CD8-positive, alpha-beta T cell (primary cell): ENCODE measurements at regions of chr14 and their contacts with region 1.

Region 1: GRCh38 chr14:99271951-99272631 is at the start of gene BCL11B:
- DNase-seq: peak in 8 of 9 experiments; percentile 74 to 93 (median 89)
- ATAC-seq: peak; percentile 73
- H3K4me3 ChIP-seq: peak within 1 kb of the TSS; percentile 81 to 88
- H3K4me3 Mint-ChIP-seq: peak within 1 kb of the TSS; percentile 99
- H3K27ac ChIP-seq: peak within 1 kb of the TSS; percentile 68 to 97
- H3K27ac Mint-ChIP-seq: peak within 1 kb of the TSS; percentile 98
- H3K4me1 ChIP-seq: peaks cover 17% of the 10 kb centered on the region
- H3K4me1 Mint-ChIP-seq: peaks cover 34% of the 10 kb centered on the region
- H3K27me3 ChIP-seq: no peaks in the 10 kb centered on the region
- H3K27me3 Mint-ChIP-seq: no peaks in the 10 kb centered on the region
- CTCF ChIP-seq: peak; percentile 61
- total RNA-seq, gene BCL11B: 273 to 284 TPM

Region 2: GRCh38 chr14:97602438-97603117 is 1669.5 kb before region 1 on chr14:
- CTCF ChIA-PET with region 1: no interaction called
- POLR2A ChIA-PET with region 1: interaction called, 3 read pairs
- intact Hi-C with region 1: loop called (anchors 2 to 5 kb)
- DNase-seq: peak; percentile 61 to 91 (median 80)
- ATAC-seq: peak; percentile 90
- H3K4me3 ChIP-seq: peak overlapping the region; percentile 19 to 21
- H3K4me3 Mint-ChIP-seq: no peak overlapping the region
- H3K27ac ChIP-seq: peak overlapping the region; percentile 66 to 84
- H3K27ac Mint-ChIP-seq: no peak overlapping the region
- H3K4me1 ChIP-seq: peaks cover 45% of the 10 kb centered on the region
- H3K4me1 Mint-ChIP-seq: peaks cover 38% of the 10 kb centered on the region
- H3K27me3 ChIP-seq: no peaks in the 10 kb centered on the region
- H3K27me3 Mint-ChIP-seq: no peaks in the 10 kb centered on the region
- CTCF ChIP-seq: no peak

Region 3: GRCh38 chr14:97724265-97724731 is 1547.8 kb before region 1 on chr14:
- CTCF ChIA-PET with region 1: no interaction called
- POLR2A ChIA-PET with region 1: no interaction called
- intact Hi-C with region 1: loop called in 1 of 2 experiments (anchors 5 kb)
- DNase-seq: peak in 7 of 9 experiments; percentile 37 to 79 (median 52)
- ATAC-seq: peak; percentile 76
- H3K4me3 ChIP-seq: peak overlapping the region; percentile 16 to 41
- H3K4me3 Mint-ChIP-seq: peak overlapping the region; percentile 83
- H3K27ac ChIP-seq: peak overlapping the region; percentile 60 to 72
- H3K27ac Mint-ChIP-seq: peak overlapping the region; percentile 98
- H3K4me1 ChIP-seq: peaks cover 65% of the 10 kb centered on the region
- H3K4me1 Mint-ChIP-seq: peaks cover 78% of the 10 kb centered on the region
- H3K27me3 ChIP-seq: no peaks in the 10 kb centered on the region
- H3K27me3 Mint-ChIP-seq: no peaks in the 10 kb centered on the region
- CTCF ChIP-seq: no peak

Region 4: GRCh38 chr14:98138666-98139065 is 1133.4 kb before region 1 on chr14:
- CTCF ChIA-PET with region 1: interaction called, 85 read pairs
- POLR2A ChIA-PET with region 1: interaction called, 29 read pairs
- intact Hi-C with region 1: loop called (anchors 1 kb)
- DNase-seq: peak; percentile 34 to 88 (median 72)
- ATAC-seq: peak; percentile 52
- H3K4me3 ChIP-seq: peak overlapping the region; percentile 2 to 56
- H3K4me3 Mint-ChIP-seq: peak overlapping the region; percentile 89
- H3K27ac ChIP-seq: peak overlapping the region; percentile 45 to 50
- H3K27ac Mint-ChIP-seq: peak overlapping the region; percentile 92
- H3K4me1 ChIP-seq: peaks cover 88% of the 10 kb centered on the region
- H3K4me1 Mint-ChIP-seq: peaks cover 91% of the 10 kb centered on the region
- H3K27me3 ChIP-seq: no peaks in the 10 kb centered on the region
- H3K27me3 Mint-ChIP-seq: no peaks in the 10 kb centered on the region
- CTCF ChIP-seq: peak; percentile 82

Region 5: DNA sequence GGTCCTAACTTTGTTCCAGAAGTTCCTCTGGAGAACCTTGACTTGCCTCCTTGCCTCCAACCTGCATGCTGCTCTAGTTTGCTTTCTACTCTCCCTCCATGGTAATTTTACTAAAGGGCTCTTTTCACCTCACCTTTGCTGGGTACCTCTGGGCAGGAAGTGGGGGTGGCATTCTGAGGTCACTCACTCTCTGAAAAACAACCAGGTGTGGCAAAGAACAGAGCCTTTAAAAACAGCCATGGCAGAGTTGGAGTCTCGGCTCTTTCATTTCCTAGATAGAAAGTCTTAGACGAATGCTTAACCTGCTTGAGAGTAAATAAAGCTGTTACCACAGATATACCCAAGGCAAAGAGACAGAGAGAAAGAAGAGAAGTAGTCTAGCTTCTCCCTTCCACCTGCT is 828.0 kb before region 1 on chr14:
- CTCF ChIA-PET with region 1: no interaction called
- POLR2A ChIA-PET with region 1: interaction called, 3 read pairs
- intact Hi-C with region 1: loop called in 1 of 2 experiments (anchors 5 kb)
- DNase-seq: peak; percentile 9 to 79 (median 51)
- ATAC-seq: peak; percentile 95
- H3K4me3 ChIP-seq: peak overlapping the region in 1 of 2 experiments; percentile 18
- H3K4me3 Mint-ChIP-seq: peak overlapping the region; percentile 68
- H3K27ac ChIP-seq: peak overlapping the region; percentile 67 to 78
- H3K27ac Mint-ChIP-seq: peak overlapping the region; percentile 100
- H3K4me1 ChIP-seq: peaks cover 38% of the 10 kb centered on the region
- H3K4me1 Mint-ChIP-seq: peaks cover 53% of the 10 kb centered on the region
- H3K27me3 ChIP-seq: no peaks in the 10 kb centered on the region
- H3K27me3 Mint-ChIP-seq: no peaks in the 10 kb centered on the region
- CTCF ChIP-seq: no peak

Region 6: DNA sequence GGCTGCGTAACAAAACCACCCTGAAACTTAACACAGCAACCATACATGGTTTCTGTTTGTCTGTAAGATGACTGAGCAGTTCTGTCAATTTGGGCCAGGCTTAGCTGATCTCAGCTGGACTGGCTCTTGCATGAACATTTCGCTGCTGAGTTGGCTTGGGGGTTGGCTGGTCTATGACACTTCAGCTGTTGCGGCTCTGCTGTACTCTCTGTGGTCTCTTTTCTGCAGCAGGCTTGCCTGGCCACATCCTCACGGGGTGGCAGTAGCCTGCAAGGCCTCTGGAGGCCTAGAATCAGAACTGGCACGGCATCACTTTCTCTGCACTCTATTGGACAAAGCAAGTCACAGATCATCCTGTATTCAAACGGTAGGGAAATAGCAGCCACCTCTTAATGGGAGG is 216.3 kb before region 1 on chr14:
- CTCF ChIA-PET with region 1: no interaction called
- POLR2A ChIA-PET with region 1: no interaction called
- intact Hi-C with region 1: loop called (anchors 5 to 10 kb)
- DNase-seq: peak; percentile 34 to 88 (median 64)
- ATAC-seq: peak; percentile 92
- H3K4me3 ChIP-seq: no peak overlapping the region
- H3K4me3 Mint-ChIP-seq: peak overlapping the region; percentile 7
- H3K27ac ChIP-seq: peak overlapping the region in 1 of 2 experiments; percentile 9
- H3K27ac Mint-ChIP-seq: peak overlapping the region; percentile 68
- H3K4me1 ChIP-seq: peaks cover 23% of the 10 kb centered on the region
- H3K4me1 Mint-ChIP-seq: peaks cover 32% of the 10 kb centered on the region
- H3K27me3 ChIP-seq: no peaks in the 10 kb centered on the region
- H3K27me3 Mint-ChIP-seq: no peaks in the 10 kb centered on the region
- CTCF ChIP-seq: no peak

Region 7: GRCh38 chr14:99378782-99379214 is 106.7 kb after region 1 on chr14:
- CTCF ChIA-PET with region 1: no interaction called
- POLR2A ChIA-PET with region 1: no interaction called
- intact Hi-C with region 1: no loop called
- DNase-seq: no peak
- ATAC-seq: no peak
- H3K4me3 ChIP-seq: no peak overlapping the region
- H3K4me3 Mint-ChIP-seq: no peak overlapping the region
- H3K27ac ChIP-seq: no peak overlapping the region
- H3K27ac Mint-ChIP-seq: no peak overlapping the region
- H3K4me1 ChIP-seq: no peaks in the 10 kb centered on the region
- H3K4me1 Mint-ChIP-seq: peaks cover 3% of the 10 kb centered on the region
- H3K27me3 ChIP-seq: peaks cover 0 to 1% of the 10 kb centered on the region in 2 experiments
- H3K27me3 Mint-ChIP-seq: peaks cover 22% of the 10 kb centered on the region
- CTCF ChIP-seq: no peak

Region 8: DNA sequence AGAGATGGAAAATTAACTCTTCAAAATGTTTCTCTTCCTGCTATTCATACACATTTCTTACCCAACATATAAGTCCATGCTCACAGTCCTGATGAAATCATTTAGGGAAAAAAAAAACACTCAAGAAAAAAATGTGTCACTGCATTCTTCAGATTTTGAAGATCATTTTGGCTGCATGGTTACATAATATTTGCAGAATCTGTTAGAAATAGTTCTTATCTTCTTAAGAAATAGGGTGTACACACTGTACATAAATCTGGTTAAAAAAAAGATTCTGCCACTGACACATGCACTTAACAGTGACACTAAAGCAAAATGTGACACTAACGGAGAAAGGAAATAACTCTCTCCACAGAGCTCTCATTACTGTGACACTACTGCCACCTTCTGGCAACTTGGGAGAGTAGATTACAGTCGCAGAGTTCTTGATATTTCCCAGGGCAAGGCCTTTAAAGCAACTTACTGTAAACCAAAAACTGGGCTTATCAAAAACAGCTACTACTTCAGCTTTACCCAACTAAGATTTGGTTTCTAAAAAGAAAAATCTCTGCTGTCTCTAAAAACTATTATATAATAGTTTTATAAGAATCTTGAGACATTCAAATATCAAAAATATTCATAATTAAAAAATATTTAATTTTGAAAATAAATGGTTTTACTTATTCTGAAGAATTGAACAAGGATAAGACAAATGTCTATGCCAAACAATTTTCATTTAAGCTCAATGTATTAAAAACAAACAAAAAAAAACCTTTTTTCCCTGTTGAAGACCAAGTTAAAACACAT is 143.6 kb after region 1 on chr14:
- CTCF ChIA-PET with region 1: no interaction called
- POLR2A ChIA-PET with region 1: no interaction called
- intact Hi-C with region 1: loop called (anchors 5 kb)
- DNase-seq: peak; percentile 33 to 90 (median 64)
- ATAC-seq: peak; percentile 99
- H3K4me3 ChIP-seq: no peak overlapping the region
- H3K4me3 Mint-ChIP-seq: no peak overlapping the region
- H3K27ac ChIP-seq: no peak overlapping the region
- H3K27ac Mint-ChIP-seq: no peak overlapping the region
- H3K4me1 ChIP-seq: no peaks in the 10 kb centered on the region
- H3K4me1 Mint-ChIP-seq: peaks cover 5% of the 10 kb centered on the region
- H3K27me3 ChIP-seq: no peaks in the 10 kb centered on the region
- H3K27me3 Mint-ChIP-seq: no peaks in the 10 kb centered on the region
- CTCF ChIP-seq: peak; percentile 92

Region 9: GRCh38 chr14:99774556-99775307 is 502.6 kb after region 1 on chr14:
- CTCF ChIA-PET with region 1: no interaction called
- POLR2A ChIA-PET with region 1: no interaction called
- intact Hi-C with region 1: no loop called
- DNase-seq: no peak
- ATAC-seq: no peak
- H3K4me3 ChIP-seq: no peak overlapping the region
- H3K4me3 Mint-ChIP-seq: no peak overlapping the region
- H3K27ac ChIP-seq: no peak overlapping the region
- H3K27ac Mint-ChIP-seq: no peak overlapping the region
- H3K4me1 ChIP-seq: no peaks in the 10 kb centered on the region
- H3K4me1 Mint-ChIP-seq: no peaks in the 10 kb centered on the region
- H3K27me3 ChIP-seq: peaks cover 0 to 3% of the 10 kb centered on the region in 2 experiments
- H3K27me3 Mint-ChIP-seq: peaks cover 40% of the 10 kb centered on the region
- CTCF ChIP-seq: no peak